T-cell (primary cell): ENCODE measurements at regions of chr22 and their contacts with region 1.

Region 1: DNA sequence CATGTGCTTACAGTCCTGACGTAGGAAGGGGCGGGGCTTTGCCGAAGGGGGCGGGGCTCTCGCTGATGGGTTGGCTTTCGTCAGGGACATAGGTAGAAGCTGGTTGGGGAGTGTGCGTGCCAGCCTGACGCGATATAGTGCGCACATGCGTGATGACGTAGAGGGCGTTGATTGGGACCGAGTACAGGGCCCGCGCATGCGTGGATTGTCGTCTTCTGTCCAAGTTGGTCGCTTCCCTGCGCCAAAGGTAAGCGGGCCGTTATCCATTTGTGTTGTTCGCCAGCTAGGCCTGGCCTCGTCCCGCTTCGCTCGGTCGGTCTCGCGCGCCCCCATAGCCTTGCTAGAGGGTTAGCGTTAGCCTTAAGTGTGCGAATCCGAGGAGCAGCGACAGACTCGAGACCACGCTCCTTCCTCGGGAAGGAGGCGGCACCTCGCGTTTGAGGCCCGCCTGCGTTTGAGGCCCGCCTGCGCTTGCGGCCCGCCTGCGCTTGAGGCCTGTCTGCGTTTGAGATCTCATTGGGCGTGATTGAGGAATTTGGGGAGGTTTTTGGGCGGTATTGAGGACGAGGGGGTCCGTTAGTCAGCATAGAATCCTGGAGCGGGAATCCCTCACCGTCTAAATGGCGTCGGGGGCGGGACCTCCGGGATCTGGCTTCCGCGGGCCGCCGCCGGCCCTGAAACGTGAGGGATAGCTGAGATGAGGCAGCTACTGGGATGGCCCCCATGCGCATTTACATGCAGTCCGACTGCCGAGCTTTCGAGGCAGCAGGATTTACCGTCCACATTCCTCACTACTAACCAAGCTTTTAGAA is at the start of gene XRCC6:
- DNase-seq: peak; percentile 99 to 100 (median 100)
- ATAC-seq: peak; percentile 90 to 95 (median 92)
- H3K4me3 ChIP-seq: peak within 1 kb of the TSS; percentile 88 to 92
- H3K4me3 Mint-ChIP-seq: peak within 1 kb of the TSS; percentile 95 to 100 (median 96)
- H3K27ac ChIP-seq: peak within 1 kb of the TSS; percentile 97
- H3K27ac Mint-ChIP-seq: peak within 1 kb of the TSS; percentile 96 to 97
- H3K4me1 ChIP-seq: peaks cover 18 to 35% of the 10 kb centered on the region in 2 experiments
- H3K4me1 Mint-ChIP-seq: peaks cover 32 to 62% (median 54%) of the 10 kb centered on the region in 3 donors
- H3K27me3 ChIP-seq: no peaks in the 10 kb centered on the region
- H3K27me3 Mint-ChIP-seq: no peaks in the 10 kb centered on the region
- total RNA-seq, gene XRCC6: 159 to 174 (median 168) TPM

Region 2: DNA sequence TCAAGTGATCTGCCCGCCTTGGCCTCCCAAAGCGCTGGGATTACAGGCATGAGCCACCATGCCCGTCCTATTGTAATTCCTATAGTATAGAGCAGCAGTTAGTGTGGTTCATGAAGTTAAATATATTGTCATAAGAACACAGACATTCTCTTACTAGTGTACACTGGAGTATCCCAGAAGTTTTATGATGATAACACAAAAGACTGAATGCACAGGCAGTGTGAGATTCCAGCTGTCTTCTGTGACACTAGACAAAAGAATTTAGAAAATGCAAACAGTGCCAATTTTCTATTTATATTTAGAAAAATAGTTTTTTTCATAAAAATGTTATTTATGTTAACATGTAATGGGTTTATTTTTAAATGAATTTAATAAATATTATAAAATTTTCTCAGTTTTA is 709.5 kb before region 1 on chr22:
- CTCF ChIA-PET with region 1: no interaction called
- POLR2A ChIA-PET with region 1: no interaction called
- DNase-seq: no peak
- ATAC-seq: no peak
- H3K4me3 ChIP-seq: no peak overlapping the region
- H3K4me3 Mint-ChIP-seq: no peak overlapping the region
- H3K27ac ChIP-seq: no peak overlapping the region
- H3K27ac Mint-ChIP-seq: no peak overlapping the region
- H3K4me1 ChIP-seq: no peaks in the 10 kb centered on the region
- H3K4me1 Mint-ChIP-seq: no peaks in the 10 kb centered on the region
- H3K27me3 ChIP-seq: no peaks in the 10 kb centered on the region
- H3K27me3 Mint-ChIP-seq: no peaks in the 10 kb centered on the region

Region 3: DNA sequence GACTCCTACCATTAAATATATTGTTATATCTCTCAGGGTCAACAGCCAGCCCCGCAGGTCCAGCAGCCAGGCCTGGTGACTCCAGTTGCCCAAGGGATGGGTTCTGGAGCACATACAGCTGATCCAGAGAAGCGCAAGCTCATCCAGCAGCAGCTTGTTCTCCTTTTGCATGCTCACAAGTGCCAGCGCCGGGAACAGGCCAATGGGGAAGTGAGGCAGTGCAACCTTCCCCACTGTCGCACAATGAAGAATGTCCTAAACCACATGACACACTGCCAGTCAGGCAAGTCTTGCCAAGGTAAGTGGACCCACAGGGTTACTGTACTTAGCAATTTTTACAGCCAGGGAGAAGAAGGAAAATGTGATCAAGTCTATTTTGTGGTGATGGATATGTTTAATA is 493.9 kb before region 1 on chr22:
- CTCF ChIA-PET with region 1: no interaction called
- POLR2A ChIA-PET with region 1: no interaction called
- DNase-seq: peak in 1 of 35 experiments; percentile 2
- ATAC-seq: no peak
- H3K4me3 ChIP-seq: no peak overlapping the region
- H3K4me3 Mint-ChIP-seq: no peak overlapping the region
- H3K27ac ChIP-seq: no peak overlapping the region
- H3K27ac Mint-ChIP-seq: no peak overlapping the region
- H3K4me1 ChIP-seq: peaks cover 0 to 3% of the 10 kb centered on the region in 2 experiments
- H3K4me1 Mint-ChIP-seq: peaks cover 9 to 11% (median 10%) of the 10 kb centered on the region in 3 donors
- H3K27me3 ChIP-seq: no peaks in the 10 kb centered on the region
- H3K27me3 Mint-ChIP-seq: no peaks in the 10 kb centered on the region

Region 4: DNA sequence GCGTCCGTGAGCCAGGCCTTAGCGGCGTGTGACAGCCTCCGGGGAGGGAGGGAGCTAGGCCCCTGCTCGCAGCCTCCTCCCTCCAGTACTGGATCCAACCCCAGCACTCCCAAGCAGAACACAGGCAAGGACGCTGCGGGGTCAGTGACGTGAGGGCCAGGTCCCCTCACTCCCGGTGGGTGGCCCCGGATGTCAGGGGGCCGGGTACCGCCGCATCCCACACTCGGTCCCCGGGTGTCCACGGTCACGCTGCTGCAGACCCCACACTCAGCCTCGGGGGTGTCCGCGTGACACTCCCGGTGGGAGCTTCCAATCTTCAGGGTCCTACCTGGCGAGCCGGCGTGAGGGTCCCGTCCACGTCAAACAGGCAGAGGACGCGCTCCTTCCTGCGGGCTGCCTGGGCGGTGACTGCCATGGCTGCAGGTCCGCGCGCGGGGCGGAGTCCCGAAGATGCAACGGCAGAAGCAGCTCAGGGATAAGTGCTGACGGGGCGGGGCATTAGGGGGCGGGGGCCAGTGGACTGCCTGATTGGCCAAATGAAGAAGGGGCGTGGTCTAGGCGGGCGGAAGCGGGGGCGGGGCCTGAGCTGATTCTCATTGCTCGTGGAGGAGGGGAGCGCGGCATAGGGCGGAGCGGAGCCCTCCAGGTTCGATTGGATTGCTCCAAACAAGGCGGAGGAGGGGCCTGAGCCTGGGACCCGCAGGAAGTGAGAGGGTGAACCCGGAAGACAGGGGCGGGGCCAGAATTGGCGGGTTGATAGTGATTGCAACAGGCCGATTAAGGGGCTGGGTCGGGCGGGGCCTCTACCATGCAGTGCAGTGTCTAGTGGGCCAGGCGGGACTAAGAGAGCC is 31.7 kb before region 1 on chr22 and contains the start of gene PMM1:
- CTCF ChIA-PET with region 1: interaction called, 3 to 5 read pairs
- POLR2A ChIA-PET with region 1: interaction called, 3 to 16 read pairs
- DNase-seq: peak; percentile 99 to 100 (median 100)
- ATAC-seq: peak; percentile 96 to 98 (median 97)
- H3K4me3 ChIP-seq: peak within 1 kb of the TSS; percentile 77 to 80
- H3K4me3 Mint-ChIP-seq: peak within 1 kb of the TSS; percentile 85 to 94 (median 89)
- H3K27ac ChIP-seq: peak within 1 kb of the TSS; percentile 44
- H3K27ac Mint-ChIP-seq: peak within 1 kb of the TSS; percentile 88 to 90
- H3K4me1 ChIP-seq: peaks cover 5 to 24% of the 10 kb centered on the region in 2 experiments
- H3K4me1 Mint-ChIP-seq: peaks cover 0 to 25% (median 21%) of the 10 kb centered on the region in 3 donors
- H3K27me3 ChIP-seq: no peaks in the 10 kb centered on the region
- H3K27me3 Mint-ChIP-seq: no peaks in the 10 kb centered on the region
- total RNA-seq, gene PMM1: 22.6 to 39.7 (median 33.4) TPM

Region 5: DNA sequence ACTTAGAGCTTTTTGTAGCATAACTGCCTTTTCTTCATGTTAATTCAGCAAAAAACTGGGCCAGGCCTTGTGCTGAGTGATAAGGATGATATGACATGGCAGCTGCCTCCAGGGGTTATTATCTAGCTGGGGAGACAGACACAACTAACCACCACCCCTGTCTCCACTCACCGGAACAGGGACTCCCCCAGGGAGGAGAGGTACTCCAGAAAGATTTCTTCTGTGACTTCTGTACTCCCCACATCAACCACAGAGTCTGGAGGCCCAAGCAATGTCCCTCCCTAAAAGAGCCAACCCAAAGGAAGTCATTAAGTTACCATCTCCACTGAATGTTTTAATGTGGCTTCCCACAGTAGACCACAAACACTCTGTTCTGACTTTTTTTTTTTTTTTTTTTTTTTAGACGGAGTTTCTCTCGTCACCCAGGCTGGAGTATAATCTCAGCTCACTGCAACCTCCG is 17.4 kb before region 1 on chr22:
- CTCF ChIA-PET with region 1: interaction called in 1 of 2 experiments, 11 read pairs
- POLR2A ChIA-PET with region 1: interaction called, 3 to 4 read pairs
- DNase-seq: peak in 33 of 35 experiments; percentile 10 to 85 (median 45)
- ATAC-seq: peak; percentile 74 to 98 (median 85)
- H3K4me3 ChIP-seq: no peak overlapping the region
- H3K4me3 Mint-ChIP-seq: no peak overlapping the region
- H3K27ac ChIP-seq: no peak overlapping the region
- H3K27ac Mint-ChIP-seq: peak overlapping the region in 1 of 2 donors; percentile 16
- H3K4me1 ChIP-seq: peaks cover 0 to 28% of the 10 kb centered on the region in 2 experiments
- H3K4me1 Mint-ChIP-seq: peaks cover 21 to 27% (median 22%) of the 10 kb centered on the region in 3 donors
- H3K27me3 ChIP-seq: peaks cover 0 to 3% of the 10 kb centered on the region in 2 experiments
- H3K27me3 Mint-ChIP-seq: no peaks in the 10 kb centered on the region